B cell (primary cell): ENCODE measurements at regions of chr7 and their contacts with region 1.

Region 1: DNA sequence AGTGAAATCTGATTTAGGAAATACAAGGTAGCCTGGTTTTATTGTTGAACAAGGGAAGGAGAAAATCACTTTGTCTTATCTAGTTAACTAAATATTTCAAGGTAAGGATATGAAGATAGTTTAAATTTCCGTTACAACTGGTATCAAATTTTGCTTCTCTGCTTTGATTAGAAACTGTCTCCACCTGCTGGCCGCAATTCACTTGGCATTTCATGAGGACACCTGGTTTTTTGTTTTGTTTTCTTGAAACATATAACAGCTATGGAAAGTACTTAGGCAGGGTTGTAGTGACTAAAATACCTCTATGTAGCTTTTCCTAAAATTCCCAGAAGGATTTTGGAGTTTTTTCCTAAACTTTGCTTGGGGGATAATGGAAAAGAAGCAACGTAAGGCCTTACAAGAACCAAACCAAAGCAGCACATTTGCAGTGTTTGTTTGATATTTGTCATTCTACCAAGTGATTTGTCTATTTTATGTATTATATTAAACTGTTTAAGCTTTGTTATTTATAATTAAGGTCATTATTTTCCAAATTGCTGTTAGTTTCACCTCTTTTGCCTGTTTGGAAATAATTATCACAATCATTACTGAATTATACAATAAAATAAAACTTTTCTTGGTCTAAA is 73.6 kb downstream of the AHCYL2 start:
- DNase-seq: peak; percentile 59
- ATAC-seq: no peak
- H3K4me3 ChIP-seq: no peak overlapping the region
- H3K4me3 Mint-ChIP-seq: no peak overlapping the region
- H3K27ac ChIP-seq: no peak overlapping the region
- H3K27ac Mint-ChIP-seq: no peak overlapping the region
- H3K4me1 ChIP-seq: no peaks in the 10 kb centered on the region
- H3K4me1 Mint-ChIP-seq: no peaks in the 10 kb centered on the region
- H3K27me3 ChIP-seq: no peaks in the 10 kb centered on the region
- H3K27me3 Mint-ChIP-seq: no peaks in the 10 kb centered on the region
- CTCF ChIP-seq: peak; percentile 84

Region 2: DNA sequence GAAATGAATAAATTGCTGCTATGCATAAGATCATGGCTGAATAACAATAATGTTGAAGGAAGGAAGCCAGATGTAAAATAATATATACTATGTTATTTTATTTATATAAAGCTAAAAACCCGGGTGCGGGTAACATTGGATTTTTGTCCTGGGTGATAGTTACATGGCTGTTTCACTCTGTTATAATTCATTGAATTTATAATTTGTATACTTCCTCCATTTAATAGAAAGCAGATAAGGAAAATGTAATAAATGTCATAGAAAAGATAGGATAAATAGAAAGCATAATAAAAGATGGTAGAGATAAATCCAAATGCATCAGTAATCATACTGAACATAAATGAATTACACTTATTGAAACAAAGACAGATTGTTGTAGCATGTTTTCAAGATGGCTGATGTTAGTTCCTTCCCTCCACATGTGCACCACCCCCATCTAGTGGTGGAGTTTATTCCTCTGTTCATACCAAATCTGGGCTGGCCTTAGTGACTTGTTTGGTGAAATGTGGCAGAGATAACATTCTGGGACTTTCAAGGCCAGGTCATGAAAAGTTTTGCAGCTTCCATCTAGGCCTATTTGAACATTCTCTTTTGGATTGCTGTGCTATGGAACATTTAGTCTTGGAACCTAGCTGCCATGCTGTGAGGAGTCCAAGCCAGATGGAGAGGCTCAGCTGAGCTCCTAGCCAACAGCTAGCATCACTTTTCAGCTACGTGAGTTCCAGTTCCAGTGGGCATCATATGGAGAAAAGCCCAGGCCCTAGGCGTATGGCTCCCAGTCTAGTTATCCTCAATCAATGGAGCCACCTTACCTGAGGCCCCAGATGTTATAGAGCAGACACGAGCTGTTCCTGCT is 26.7 kb before region 1 on chr7:
- CTCF ChIA-PET with region 1: interaction called, 32 read pairs
- POLR2A ChIA-PET with region 1: no interaction called
- intact Hi-C with region 1: no loop called
- DNase-seq: peak; percentile 83
- ATAC-seq: peak; percentile 89
- H3K4me3 ChIP-seq: peak overlapping the region in 1 of 5 experiments; percentile 11
- H3K4me3 Mint-ChIP-seq: peak overlapping the region; percentile 64
- H3K27ac ChIP-seq: no peak overlapping the region
- H3K27ac Mint-ChIP-seq: no peak overlapping the region
- H3K4me1 ChIP-seq: peaks cover 11 to 13% of the 10 kb centered on the region in 2 donors
- H3K4me1 Mint-ChIP-seq: peaks cover 18% of the 10 kb centered on the region
- H3K27me3 ChIP-seq: no peaks in the 10 kb centered on the region
- H3K27me3 Mint-ChIP-seq: no peaks in the 10 kb centered on the region
- CTCF ChIP-seq: peak; percentile 91

Region 3: DNA sequence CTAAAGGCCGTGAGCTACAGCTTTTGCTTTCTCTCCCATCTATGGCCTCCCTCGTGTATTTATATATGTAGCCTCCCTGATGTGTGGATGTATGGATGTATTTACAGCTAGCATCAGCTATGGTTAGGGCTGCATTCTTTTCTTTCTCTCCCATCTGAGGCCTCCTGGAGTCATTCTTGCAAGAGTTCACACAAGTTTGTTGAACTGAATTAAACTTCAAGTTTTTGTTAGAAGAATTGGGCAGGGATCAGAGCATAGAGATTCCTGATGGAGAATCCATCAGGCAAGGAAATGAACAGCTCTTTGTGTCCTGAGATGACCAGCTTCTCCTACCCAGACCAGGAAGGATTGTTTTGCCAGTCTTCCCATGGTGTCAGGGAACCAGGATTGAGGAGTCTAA is 13.3 kb before region 1 on chr7:
- CTCF ChIA-PET with region 1: interaction called, 8 read pairs
- POLR2A ChIA-PET with region 1: interaction called, 14 read pairs
- intact Hi-C with region 1: no loop called
- DNase-seq: no peak
- ATAC-seq: no peak
- H3K4me3 ChIP-seq: no peak overlapping the region
- H3K4me3 Mint-ChIP-seq: no peak overlapping the region
- H3K27ac ChIP-seq: no peak overlapping the region
- H3K27ac Mint-ChIP-seq: no peak overlapping the region
- H3K4me1 ChIP-seq: no peaks in the 10 kb centered on the region
- H3K4me1 Mint-ChIP-seq: no peaks in the 10 kb centered on the region
- H3K27me3 ChIP-seq: no peaks in the 10 kb centered on the region
- H3K27me3 Mint-ChIP-seq: no peaks in the 10 kb centered on the region
- CTCF ChIP-seq: no peak

Region 4: DNA sequence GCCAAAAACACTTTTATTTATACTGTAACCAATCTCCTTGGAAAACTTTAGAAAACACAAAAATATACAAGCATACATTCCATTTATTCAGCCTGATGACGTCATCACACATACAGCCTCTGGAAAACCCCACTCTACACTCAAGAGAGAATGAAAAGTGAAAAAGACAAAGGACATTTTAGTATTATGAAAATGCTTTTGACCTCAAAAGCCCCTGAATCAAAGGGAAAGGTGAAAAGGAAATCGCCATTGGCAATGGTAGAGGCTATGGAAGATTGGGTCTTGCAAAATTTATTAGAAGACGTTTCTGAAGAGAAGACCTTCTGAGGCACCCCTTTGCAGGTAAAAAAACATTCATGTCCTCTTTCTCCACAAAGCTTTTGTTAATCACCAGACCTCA is 52.9 kb after region 1 on chr7:
- CTCF ChIA-PET with region 1: no interaction called
- POLR2A ChIA-PET with region 1: no interaction called
- intact Hi-C with region 1: no loop called
- DNase-seq: no peak
- ATAC-seq: no peak
- H3K4me3 ChIP-seq: no peak overlapping the region
- H3K4me3 Mint-ChIP-seq: no peak overlapping the region
- H3K27ac ChIP-seq: no peak overlapping the region
- H3K27ac Mint-ChIP-seq: no peak overlapping the region
- H3K4me1 ChIP-seq: no peaks in the 10 kb centered on the region
- H3K4me1 Mint-ChIP-seq: no peaks in the 10 kb centered on the region
- H3K27me3 ChIP-seq: no peaks in the 10 kb centered on the region
- H3K27me3 Mint-ChIP-seq: no peaks in the 10 kb centered on the region
- CTCF ChIP-seq: no peak

Region 5: DNA sequence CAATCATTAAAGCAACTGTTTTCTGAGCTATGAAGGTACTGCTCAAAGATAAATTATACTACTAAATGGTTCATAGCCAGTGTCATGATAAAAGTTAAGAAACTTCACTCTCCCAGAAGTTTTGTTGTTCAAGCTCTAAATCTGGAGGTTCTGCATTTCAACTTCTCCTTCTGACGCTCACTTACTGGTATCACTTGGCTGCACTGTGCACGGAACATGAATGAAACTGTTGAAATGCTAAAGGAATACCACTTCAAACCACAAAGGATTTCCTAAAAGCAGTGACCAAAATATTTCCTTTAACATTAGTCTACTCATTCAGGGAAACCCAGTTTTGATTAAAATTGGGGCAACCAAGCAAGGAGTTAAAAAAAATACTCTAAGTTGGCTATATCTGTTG is 560.8 kb after region 1 on chr7:
- CTCF ChIA-PET with region 1: no interaction called
- POLR2A ChIA-PET with region 1: no interaction called
- intact Hi-C with region 1: no loop called
- DNase-seq: peak; percentile 46
- ATAC-seq: peak; percentile 49
- H3K4me3 ChIP-seq: no peak overlapping the region
- H3K4me3 Mint-ChIP-seq: no peak overlapping the region
- H3K27ac ChIP-seq: no peak overlapping the region
- H3K27ac Mint-ChIP-seq: no peak overlapping the region
- H3K4me1 ChIP-seq: peaks cover 34 to 46% of the 10 kb centered on the region in 2 donors
- H3K4me1 Mint-ChIP-seq: peaks cover 62% of the 10 kb centered on the region
- H3K27me3 ChIP-seq: no peaks in the 10 kb centered on the region
- H3K27me3 Mint-ChIP-seq: no peaks in the 10 kb centered on the region
- CTCF ChIP-seq: no peak